Mammary epithelial cell (primary cell): ENCODE measurements at regions of chr11 and their contacts with region 1.

Region 1: GRCh38 chr11:122101625-122102291 is 14.3 kb downstream of the BLID start:
- DNase-seq: peak; percentile 71
- H3K4me3 ChIP-seq: peak overlapping the region; percentile 52 to 83 (median 72)
- H3K27ac ChIP-seq: peak overlapping the region; percentile 67
- H3K4me1 ChIP-seq: peaks cover 54% of the 10 kb centered on the region
- H3K27me3 ChIP-seq: no peaks in the 10 kb centered on the region
- CTCF ChIP-seq: peak; percentile 39 to 71

Region 2: GRCh38 chr11:121318848-121319834 is 782.6 kb before region 1 on chr11:
- CTCF ChIA-PET with region 1: no interaction called
- dilution Hi-C with region 1: no loop called
- in situ Hi-C with region 1: no loop called
- intact Hi-C with region 1: loop called (anchors 1 kb)
- DNase-seq: peak; percentile 49
- H3K4me3 ChIP-seq: no peak overlapping the region
- H3K27ac ChIP-seq: no peak overlapping the region
- H3K4me1 ChIP-seq: peaks cover 4% of the 10 kb centered on the region
- H3K27me3 ChIP-seq: no peaks in the 10 kb centered on the region
- CTCF ChIP-seq: peak; percentile 79 to 89

Region 3: GRCh38 chr11:121829159-121829643 is 272.6 kb before region 1 on chr11:
- CTCF ChIA-PET with region 1: interaction called, 5 read pairs
- dilution Hi-C with region 1: no loop called
- in situ Hi-C with region 1: no loop called
- intact Hi-C with region 1: loop called (anchors 1 kb)
- DNase-seq: peak; percentile 91
- H3K4me3 ChIP-seq: no peak overlapping the region
- H3K27ac ChIP-seq: peak overlapping the region; percentile 17
- H3K4me1 ChIP-seq: peaks cover 18% of the 10 kb centered on the region
- H3K27me3 ChIP-seq: no peaks in the 10 kb centered on the region
- CTCF ChIP-seq: no peak

Region 4: DNA sequence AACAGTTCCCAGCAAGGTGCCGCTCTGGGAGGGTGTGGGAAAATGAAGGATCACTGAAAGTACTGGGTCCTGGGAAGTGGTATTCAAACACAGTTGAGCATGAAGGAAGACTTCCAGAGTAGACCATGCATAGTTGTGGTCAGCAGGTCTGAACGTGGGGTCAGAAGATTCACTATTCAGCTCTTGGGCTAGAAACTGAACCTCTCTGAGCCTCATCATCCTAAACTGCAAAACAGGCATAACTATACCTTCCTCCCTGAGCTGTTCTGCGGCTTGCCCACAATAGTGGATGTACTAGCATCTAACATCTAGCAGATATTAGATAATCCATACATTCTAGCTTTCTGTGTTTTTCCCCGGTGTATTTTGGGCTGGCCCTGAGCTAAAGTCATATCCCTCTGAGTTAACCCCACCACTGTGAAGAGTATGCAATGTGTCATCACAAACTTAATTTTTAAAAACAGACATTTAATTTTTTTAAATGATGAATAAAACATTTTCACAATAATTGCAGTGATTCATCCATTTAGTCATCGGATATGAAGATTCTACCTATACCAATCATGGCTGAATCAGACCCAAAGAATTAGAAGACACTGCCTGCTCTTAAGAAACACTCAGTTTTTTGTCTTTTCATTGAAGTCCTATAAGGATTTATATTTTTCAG is 164.8 kb before region 1 on chr11:
- CTCF ChIA-PET with region 1: no interaction called
- dilution Hi-C with region 1: no loop called
- in situ Hi-C with region 1: no loop called
- intact Hi-C with region 1: loop called (anchors 2 kb)
- DNase-seq: peak; percentile 77
- H3K4me3 ChIP-seq: no peak overlapping the region
- H3K27ac ChIP-seq: peak overlapping the region; percentile 61
- H3K4me1 ChIP-seq: peaks cover 40% of the 10 kb centered on the region
- H3K27me3 ChIP-seq: no peaks in the 10 kb centered on the region
- CTCF ChIP-seq: no peak

Region 5: DNA sequence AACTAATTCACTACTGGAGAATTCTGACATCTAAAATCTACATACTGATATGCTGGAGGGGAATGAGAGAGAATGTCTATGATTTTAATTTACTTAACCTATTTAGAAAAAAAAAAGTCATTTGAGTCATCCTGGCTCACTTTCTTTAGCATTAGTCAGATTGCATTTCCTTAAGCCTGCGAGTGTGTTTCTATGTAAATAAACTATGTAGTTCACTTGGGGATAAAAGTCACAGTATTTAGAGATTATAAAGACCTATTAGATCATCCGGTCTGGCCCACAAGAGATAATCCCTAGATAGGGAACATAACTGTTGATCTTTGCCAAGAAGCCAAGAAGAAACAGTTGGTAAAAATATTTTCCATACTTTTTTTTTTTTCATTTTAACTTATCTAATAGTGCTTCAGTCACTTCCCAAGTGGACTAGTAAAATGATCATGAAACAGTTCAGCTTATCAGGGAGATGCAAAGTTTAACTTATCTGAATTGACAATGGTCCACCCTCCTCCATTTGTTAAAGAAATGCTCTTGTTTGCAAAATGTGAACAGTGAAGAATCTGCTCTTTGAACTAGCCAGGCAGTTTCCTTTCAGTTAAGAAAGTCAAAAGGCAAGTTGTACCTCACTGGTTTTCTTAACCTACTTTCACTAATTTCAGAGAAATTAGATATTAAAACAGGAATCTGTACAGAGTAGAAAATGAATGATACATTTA is 35.5 kb after region 1 on chr11:
- CTCF ChIA-PET with region 1: no interaction called
- dilution Hi-C with region 1: loop called (anchors 5 kb)
- in situ Hi-C with region 1: no loop called
- intact Hi-C with region 1: no loop called
- DNase-seq: peak; percentile 65
- H3K4me3 ChIP-seq: no peak overlapping the region
- H3K27ac ChIP-seq: peak overlapping the region; percentile 68
- H3K4me1 ChIP-seq: peaks cover 59% of the 10 kb centered on the region
- H3K27me3 ChIP-seq: no peaks in the 10 kb centered on the region
- CTCF ChIP-seq: no peak

Region 6: DNA sequence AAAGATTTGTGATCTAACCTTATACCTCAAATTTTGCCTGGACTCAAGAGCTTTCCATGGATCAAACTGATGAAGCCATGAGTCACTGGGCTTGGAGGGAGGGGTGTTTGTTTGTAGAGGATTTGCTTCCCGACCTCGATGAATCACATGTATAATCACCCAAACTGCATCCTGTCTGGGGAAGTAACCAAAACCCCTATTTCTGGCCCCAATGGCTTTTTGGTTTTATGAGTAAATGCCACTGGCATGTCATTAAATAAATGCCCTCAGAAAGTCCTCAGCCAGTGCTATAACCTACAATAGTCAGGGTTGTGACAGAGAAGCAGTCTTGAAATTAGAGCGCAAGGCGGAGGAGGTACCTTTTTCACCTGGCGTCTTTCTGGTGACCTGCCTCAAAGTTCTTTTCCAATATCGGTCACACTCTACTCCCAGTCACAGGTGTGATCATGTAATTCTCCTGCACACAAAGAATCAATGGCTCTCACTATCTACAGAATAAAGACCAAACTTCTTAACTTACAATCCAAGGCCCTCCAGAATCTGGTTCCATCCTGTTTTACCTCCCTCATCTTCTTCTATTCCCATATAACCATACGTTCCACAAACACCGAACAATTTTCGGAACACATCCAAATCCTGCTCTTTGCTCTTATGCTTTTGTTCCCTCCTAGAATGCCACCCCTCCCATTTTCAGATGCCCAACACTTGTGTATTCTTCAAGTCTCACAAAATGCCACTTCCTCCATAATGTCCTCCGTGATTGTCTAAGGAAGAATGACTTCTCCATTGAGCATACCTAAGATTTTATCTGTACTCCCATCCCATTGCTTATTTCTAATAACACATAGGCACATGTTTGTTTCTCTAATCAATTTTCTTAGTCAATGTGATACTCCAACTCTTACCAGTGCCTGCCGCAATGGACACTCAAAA is 95.6 kb after region 1 on chr11:
- CTCF ChIA-PET with region 1: interaction called, 7 read pairs
- dilution Hi-C with region 1: no loop called
- in situ Hi-C with region 1: loop called in 1 of 2 experiments (anchors 10 kb)
- intact Hi-C with region 1: no loop called
- DNase-seq: peak; percentile 96
- H3K4me3 ChIP-seq: peak overlapping the region in 1 of 3 experiments; percentile 10
- H3K27ac ChIP-seq: peak overlapping the region; percentile 71
- H3K4me1 ChIP-seq: peaks cover 73% of the 10 kb centered on the region
- H3K27me3 ChIP-seq: no peaks in the 10 kb centered on the region
- CTCF ChIP-seq: no peak